ENCODE measurements at regions of chr17 and their contacts with region 1.

Region 1: DNA sequence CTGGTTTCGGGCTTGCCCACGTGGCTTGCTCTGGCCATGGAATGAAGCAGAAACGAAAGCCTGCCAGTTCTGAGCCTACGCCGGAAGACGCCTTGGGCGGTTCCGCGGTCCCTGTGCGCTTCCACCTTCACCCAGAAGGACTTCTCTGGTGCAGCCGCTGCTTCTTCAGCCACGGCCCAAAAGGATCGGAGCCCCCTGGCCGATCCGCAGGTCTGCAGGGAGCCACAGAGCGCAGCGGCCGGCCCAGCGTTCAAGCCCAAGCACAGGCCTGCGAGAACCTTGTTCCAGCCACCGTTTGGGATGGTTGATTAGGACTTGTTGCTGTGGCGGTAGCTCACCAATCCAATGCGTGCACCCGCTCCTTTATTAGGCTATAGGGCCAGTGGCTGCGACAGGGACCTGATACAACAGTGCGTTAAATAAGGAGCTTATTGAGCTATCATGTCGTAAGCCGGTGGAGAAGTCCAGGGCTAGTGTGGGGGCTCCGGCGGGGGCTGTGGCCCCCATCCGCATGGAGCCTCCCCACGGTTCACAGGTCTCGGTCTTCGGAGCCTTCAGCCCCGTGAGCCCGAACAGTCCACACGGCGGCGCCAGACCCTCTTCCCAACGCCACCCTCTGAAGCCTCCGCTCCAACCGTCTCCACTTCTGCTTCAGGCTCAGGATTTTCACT is 10.1 kb upstream of the MPP2 start:
- DNase-seq: peak; percentile 34 to 56 (median 46)
- ATAC-seq: peak; percentile 85
- H3K4me3 ChIP-seq: peak overlapping the region; percentile 65
- H3K4me3 Mint-ChIP-seq: peak overlapping the region; percentile 72 to 89 (median 83)
- H3K27ac ChIP-seq: peak overlapping the region; percentile 65
- H3K27ac Mint-ChIP-seq: peak overlapping the region; percentile 6 to 84 (median 68)
- H3K4me1 ChIP-seq: peaks cover 0 to 9% of the 10 kb centered on the region in 2 donors
- H3K4me1 Mint-ChIP-seq: peaks cover 10 to 28% (median 17%) of the 10 kb centered on the region in 7 donors
- H3K27me3 ChIP-seq: no peaks in the 10 kb centered on the region
- H3K27me3 Mint-ChIP-seq: peaks cover 0 to 11% (median 0%) of the 10 kb centered on the region in 5 donors

Region 2: DNA sequence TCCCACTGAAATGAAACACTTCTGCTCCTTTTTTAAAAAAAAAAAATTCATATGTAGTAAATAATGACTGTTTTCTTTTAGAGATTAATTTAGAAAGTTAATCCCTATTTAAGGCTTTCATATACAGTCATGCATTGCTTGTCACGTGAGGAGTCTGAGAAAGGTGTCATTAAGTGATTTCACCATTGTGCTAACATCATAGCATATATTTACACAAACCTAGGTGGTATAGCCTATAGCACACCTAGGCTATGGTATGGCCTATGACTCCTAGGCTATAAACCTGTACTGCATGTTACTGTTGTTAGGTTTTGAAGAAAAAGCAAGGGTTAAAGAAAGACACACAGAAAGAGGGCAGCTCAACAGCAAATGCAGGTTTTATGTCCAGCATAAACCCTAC is 11.1 kb after region 1 on chr17:
- CTCF ChIA-PET with region 1: interaction called, 8 read pairs
- POLR2A ChIA-PET with region 1: interaction called, 5 read pairs
- intact Hi-C with region 1: loop called in 1 of 2 experiments (anchors 1 kb)
- DNase-seq: no peak
- ATAC-seq: no peak
- H3K4me3 ChIP-seq: no peak overlapping the region
- H3K4me3 Mint-ChIP-seq: peak overlapping the region in 2 of 10 donors; percentile 21 to 98
- H3K27ac ChIP-seq: no peak overlapping the region
- H3K27ac Mint-ChIP-seq: peak overlapping the region in 7 of 9 donors; percentile 43 to 92 (median 86)
- H3K4me1 ChIP-seq: peaks cover 12 to 13% of the 10 kb centered on the region in 2 donors
- H3K4me1 Mint-ChIP-seq: peaks cover 12 to 34% (median 27%) of the 10 kb centered on the region in 7 donors
- H3K27me3 ChIP-seq: no peaks in the 10 kb centered on the region
- H3K27me3 Mint-ChIP-seq: peaks cover 0 to 17% (median 0%) of the 10 kb centered on the region in 5 donors

Region 3: DNA sequence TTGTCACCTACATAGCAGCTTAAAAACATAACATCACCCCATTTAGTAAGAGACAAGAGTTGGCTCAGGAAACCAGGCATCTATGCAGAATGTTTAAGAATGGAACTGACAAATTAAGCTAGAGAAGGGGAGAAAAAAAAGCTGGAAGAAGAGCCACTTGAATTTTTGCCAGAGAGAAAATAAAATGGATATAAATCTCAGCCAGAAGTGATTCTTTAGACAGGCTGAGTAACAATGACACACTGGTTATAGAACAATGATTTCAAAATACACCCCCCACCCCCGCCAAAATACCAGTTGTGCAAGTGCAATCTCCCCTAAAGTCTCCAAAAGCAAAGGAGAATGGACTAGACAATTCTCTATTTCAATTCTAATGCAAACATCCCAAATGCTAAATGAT is 126.6 kb after region 1 on chr17:
- CTCF ChIA-PET with region 1: interaction called, 4 read pairs
- POLR2A ChIA-PET with region 1: no interaction called
- intact Hi-C with region 1: loop called in 1 of 2 experiments (anchors 10 kb)
- DNase-seq: no peak
- ATAC-seq: no peak
- H3K4me3 ChIP-seq: no peak overlapping the region
- H3K4me3 Mint-ChIP-seq: no peak overlapping the region
- H3K27ac ChIP-seq: no peak overlapping the region
- H3K27ac Mint-ChIP-seq: peak overlapping the region in 5 of 9 donors; percentile 2 to 52 (median 7)
- H3K4me1 ChIP-seq: peaks cover 0 to 5% of the 10 kb centered on the region in 2 donors
- H3K4me1 Mint-ChIP-seq: peaks cover 14 to 27% (median 19%) of the 10 kb centered on the region in 7 donors
- H3K27me3 ChIP-seq: no peaks in the 10 kb centered on the region
- H3K27me3 Mint-ChIP-seq: no peaks in the 10 kb centered on the region